ENCODE measurements at regions of chr1 and their contacts with region 1.

Region 1: DNA sequence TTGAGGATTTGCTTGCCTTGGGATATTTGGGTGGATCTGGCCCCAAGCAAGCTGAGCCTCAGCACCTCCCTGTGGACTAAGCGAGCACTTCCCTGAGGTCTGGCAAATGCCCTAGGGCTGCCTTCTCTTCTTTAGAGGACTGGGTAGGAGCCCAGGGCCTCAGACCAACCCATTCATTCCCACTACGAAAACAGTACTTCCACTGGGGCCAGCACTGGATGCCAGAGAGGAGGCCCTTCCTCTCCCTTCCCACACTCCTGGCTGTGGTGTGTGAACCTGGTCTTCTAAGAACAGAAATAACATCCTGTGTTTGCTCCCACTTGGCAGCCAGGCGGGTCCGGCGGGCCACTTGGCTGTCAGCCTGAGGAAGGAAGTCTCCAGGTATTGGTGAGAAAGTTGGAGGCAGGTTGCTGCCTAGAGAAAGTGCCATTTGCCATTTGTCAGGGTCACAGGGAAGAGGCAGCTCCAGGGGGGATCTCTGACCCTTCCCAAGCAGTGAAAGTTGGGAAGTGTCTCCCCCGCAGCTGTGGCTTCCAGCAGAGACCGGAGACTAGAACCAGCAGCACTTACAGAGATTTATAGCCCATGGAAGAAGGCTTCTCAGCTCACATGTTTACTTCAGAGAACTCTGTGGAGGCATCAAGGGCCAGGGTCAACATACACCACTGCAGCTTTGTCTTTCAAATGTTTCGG is 323.5 kb downstream of the SIPA1L2 start:
- DNase-seq: no peak
- H3K4me3 ChIP-seq: no peak overlapping the region
- H3K27ac ChIP-seq: no peak overlapping the region
- H3K4me1 ChIP-seq: no peaks in the 10 kb centered on the region
- H3K27me3 ChIP-seq: no peaks in the 10 kb centered on the region
- CTCF ChIP-seq: peak; percentile 18 to 38

Region 2: DNA sequence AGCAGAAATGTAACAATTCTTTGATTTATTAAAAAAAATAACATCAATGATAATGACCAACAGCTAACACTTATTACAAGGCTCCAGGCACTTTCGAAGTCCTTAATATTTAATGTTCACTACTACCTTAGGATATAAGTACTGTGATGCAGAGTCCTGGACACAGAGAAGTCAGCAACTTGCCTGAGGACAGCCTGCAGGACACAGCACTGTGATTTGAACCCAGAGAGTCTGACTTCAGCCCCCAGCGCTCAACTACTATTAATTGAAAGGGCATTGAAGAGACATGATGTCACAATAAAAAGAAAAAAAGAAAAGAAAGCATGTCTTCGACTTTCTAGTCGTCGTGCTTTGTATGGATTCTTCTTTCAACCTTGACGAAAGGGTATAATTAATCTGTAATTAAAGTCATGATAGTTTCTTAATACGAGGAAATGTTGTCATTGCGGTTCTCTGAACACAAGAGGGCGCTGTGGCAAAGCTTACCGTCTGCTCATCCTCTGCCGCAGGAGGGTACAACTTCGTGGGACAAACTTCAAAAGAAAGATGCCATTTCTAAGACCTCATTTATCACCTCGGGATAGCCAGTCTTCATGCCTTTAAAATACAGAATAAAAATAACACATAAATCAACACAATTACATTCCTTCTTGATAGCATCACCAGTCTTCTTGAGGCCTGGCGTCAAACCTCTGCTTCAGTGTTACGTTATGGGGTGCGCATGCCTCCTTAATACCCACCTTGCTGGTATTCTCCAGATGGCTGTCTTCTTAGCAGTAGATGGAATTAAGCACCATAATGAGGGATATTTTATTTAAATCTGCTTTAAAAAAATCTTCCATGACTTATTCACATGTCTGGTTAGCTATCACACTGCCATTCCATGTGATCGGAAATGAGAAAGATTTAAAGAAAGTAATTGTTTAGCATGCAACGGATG is 439.8 kb before region 1 on chr1:
- CTCF ChIA-PET with region 1: no interaction called
- dilution Hi-C with region 1: no loop called
- in situ Hi-C with region 1: no loop called
- intact Hi-C with region 1: loop called (anchors 5 kb)
- DNase-seq: peak; percentile 17
- H3K4me3 ChIP-seq: no peak overlapping the region
- H3K27ac ChIP-seq: no peak overlapping the region
- H3K4me1 ChIP-seq: no peaks in the 10 kb centered on the region
- H3K27me3 ChIP-seq: no peaks in the 10 kb centered on the region
- CTCF ChIP-seq: peak; percentile 73 to 82

Region 3: DNA sequence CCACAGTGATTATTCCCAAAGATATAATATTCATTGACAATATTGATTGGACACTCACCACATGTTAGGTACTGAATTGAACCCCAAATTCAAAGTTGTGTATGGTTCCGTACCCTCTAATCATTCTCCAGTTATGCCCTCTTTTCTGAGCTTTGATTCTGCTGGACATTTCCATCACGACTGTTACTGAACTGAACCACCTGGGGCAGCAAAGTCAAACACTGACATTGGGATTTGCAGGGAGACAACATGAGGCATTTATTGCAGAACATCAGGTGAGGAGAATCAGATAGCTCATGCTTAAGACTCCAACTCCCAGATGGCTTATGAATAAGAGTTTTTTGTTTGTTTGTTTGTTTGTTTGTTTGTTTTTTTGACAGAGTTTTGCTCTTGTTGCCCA is 258.9 kb before region 1 on chr1:
- CTCF ChIA-PET with region 1: no interaction called
- dilution Hi-C with region 1: no loop called
- in situ Hi-C with region 1: no loop called
- intact Hi-C with region 1: no loop called
- DNase-seq: no peak
- H3K4me3 ChIP-seq: no peak overlapping the region
- H3K27ac ChIP-seq: no peak overlapping the region
- H3K4me1 ChIP-seq: peaks cover 12% of the 10 kb centered on the region
- H3K27me3 ChIP-seq: no peaks in the 10 kb centered on the region
- CTCF ChIP-seq: peak; percentile 19 to 37

Region 4: DNA sequence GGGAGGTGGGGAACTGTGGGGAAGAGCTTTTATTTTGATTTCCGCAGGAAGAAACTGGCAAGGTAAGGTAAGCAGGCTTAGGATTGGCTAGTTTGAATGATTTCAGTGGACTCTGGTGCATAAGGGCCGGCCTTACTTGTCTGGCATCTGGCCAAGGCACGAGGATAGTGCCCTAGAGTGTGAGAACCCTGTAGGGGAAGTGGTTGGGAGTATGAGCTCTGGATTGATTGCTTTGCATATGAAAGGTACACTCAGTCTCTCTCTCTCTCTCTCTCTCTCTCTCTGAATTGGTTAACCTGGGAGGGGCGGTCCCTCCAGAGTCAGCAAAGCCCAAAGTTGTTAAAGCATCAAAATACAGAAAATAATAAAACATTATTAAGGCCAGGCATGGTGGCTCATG is 139.5 kb before region 1 on chr1:
- CTCF ChIA-PET with region 1: no interaction called
- dilution Hi-C with region 1: no loop called
- in situ Hi-C with region 1: no loop called
- intact Hi-C with region 1: no loop called
- DNase-seq: no peak
- H3K4me3 ChIP-seq: no peak overlapping the region
- H3K27ac ChIP-seq: no peak overlapping the region
- H3K4me1 ChIP-seq: no peaks in the 10 kb centered on the region
- H3K27me3 ChIP-seq: no peaks in the 10 kb centered on the region
- CTCF ChIP-seq: no peak

Region 5: DNA sequence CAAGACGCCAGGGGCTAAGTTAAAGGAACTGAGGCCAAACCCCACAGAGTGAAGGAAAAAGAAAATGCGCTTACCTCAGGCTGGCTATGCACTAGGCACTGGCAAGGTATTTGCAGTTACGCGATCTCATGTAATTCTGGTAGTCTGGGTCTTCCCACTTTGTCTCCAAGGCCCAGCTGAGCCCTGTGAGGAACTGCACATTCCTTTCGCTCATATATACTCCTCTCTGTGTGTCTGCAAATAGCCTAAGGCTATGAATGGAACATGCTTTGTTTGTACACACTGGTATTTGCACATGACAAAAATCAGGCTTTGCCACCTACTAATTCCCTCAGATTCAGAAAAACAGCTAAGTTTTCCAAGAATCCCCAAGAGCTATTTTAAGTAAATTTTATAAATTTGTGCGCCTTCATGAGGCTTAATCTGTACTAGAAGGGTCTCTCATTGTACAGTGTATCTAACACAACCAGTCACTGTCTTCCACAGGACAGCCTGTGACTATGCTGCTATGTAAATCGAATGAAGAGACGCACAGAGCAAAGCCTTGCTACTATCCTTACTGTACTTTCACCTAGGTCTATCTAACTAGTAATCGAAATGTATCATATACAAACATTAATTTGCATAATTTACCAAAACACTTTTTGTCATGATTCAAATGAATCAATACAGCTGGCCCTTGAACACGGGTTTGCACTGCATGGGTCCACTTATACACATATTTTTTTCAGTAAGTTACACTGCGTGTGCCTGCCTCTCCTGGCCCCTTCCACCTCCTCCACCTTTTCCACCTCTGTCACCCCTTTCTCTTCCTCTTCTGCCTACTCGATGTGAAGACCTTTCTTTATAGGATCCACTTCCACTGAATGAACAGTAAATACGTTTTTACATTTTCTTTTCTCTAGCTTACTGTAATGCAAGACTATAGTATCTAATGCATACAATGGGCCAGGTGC is 236.5 kb after region 1 on chr1:
- CTCF ChIA-PET with region 1: no interaction called
- dilution Hi-C with region 1: no loop called
- in situ Hi-C with region 1: no loop called
- intact Hi-C with region 1: no loop called
- DNase-seq: no peak
- H3K4me3 ChIP-seq: no peak overlapping the region
- H3K27ac ChIP-seq: no peak overlapping the region
- H3K4me1 ChIP-seq: peaks cover 12% of the 10 kb centered on the region
- H3K27me3 ChIP-seq: no peaks in the 10 kb centered on the region
- CTCF ChIP-seq: no peak